Endothelial cell of umbilical vein (primary cell): ENCODE measurements at regions of chr1 and their contacts with region 1.

Region 1: DNA sequence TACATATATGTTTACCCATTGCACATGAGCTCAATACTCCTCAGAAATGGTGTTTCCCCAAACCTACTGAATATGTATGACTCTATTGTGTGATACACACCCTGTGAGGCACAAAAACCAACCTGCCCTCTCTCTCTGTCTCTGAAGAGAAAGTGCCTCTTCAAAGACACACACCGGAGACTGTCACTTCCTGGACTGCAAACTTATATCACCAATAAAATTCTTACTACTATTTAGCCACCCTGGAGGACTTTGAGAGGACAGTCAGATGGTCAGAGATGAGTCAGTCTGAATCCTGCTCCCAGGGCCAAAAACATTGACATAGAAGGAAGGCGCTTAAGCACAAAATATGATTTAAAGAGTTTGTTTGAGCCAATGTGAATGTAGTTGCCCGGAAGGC is 110.4 kb downstream of the PPIAL4G start:
- DNase-seq: no peak
- H3K4me3 ChIP-seq: no peak overlapping the region
- H3K27ac ChIP-seq: no peak overlapping the region
- H3K4me1 ChIP-seq: peaks cover 11% of the 10 kb centered on the region
- H3K27me3 ChIP-seq: peaks cover 3 to 4% of the 10 kb centered on the region in 2 experiments
- CTCF ChIP-seq: no peak
- POLR2A ChIP-seq: no peak

Region 2: GRCh38 chr1:148334339-148335130 is 38.2 kb before region 1 on chr1:
- CTCF ChIA-PET with region 1: no interaction called
- POLR2A ChIA-PET with region 1: no interaction called
- dilution Hi-C with region 1: no loop called
- intact Hi-C with region 1: loop called (anchors 5 kb)
- DNase-seq: peak; percentile 63
- H3K4me3 ChIP-seq: peak overlapping the region in 2 of 3 experiments; percentile 12 to 34
- H3K27ac ChIP-seq: no peak overlapping the region
- H3K4me1 ChIP-seq: peaks cover 10% of the 10 kb centered on the region
- H3K27me3 ChIP-seq: peaks cover 11 to 22% of the 10 kb centered on the region in 2 experiments
- CTCF ChIP-seq: no peak
- POLR2A ChIP-seq: peak; percentile 100

Region 3: DNA sequence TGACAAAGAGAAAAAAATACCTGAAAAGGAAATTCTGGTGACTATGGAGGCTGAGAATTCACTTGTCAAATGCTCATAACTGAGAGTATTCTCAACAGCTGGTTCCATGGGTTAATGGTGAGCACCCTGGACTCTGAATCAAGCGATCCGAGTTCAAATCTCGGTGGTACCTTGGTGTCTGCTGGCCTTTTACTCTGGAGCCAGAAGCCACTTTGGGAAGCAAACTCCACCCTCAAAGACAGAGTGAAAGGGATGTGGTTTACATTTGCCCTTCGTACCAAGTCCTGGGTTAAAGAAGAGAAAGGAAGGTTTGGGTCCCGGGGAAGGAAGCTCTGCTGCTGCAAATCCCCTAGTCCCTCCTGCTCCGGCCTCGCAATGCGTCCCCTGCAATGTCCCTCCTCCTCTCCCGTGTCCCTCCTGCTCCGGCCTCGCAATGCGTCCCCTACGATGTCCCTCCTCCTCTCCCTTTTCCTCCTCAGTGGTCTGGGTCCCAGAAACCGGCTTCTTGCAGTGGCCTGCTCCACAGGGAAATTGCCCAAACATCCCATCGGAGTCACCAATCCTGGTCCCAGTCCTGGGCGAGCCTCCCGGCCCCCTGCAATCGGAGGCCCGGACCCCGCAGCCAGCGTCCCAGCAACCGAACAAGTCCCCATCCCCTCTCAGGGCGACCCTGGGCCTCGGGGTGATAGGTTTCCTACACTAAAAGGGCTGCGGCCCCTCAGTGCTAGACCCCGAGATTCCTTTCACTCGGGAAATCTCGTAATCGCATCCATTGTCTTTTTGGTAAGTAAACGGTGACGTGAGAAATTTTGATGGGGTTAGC is 19.1 kb before region 1 on chr1:
- CTCF ChIA-PET with region 1: interaction called, 4 read pairs
- POLR2A ChIA-PET with region 1: no interaction called
- dilution Hi-C with region 1: no loop called
- intact Hi-C with region 1: loop called (anchors 2 kb)
- DNase-seq: peak; percentile 2
- H3K4me3 ChIP-seq: no peak overlapping the region
- H3K27ac ChIP-seq: no peak overlapping the region
- H3K4me1 ChIP-seq: no peaks in the 10 kb centered on the region
- H3K27me3 ChIP-seq: peaks cover 44 to 81% of the 10 kb centered on the region in 2 experiments
- CTCF ChIP-seq: no peak
- POLR2A ChIP-seq: no peak